ENCODE measurements at regions of chr1 and their contacts with region 1.

Region 1: GRCh38 chr1:116556289-116557006 is 14.4 kb downstream of the CD58 start:
- DNase-seq: peak; percentile 88
- H3K4me3 Mint-ChIP-seq: peak overlapping the region; percentile 19
- H3K27ac Mint-ChIP-seq: peak overlapping the region; percentile 86
- H3K4me1 Mint-ChIP-seq: peaks cover 69% of the 10 kb centered on the region
- H3K27me3 Mint-ChIP-seq: no peaks in the 10 kb centered on the region

Region 2: DNA sequence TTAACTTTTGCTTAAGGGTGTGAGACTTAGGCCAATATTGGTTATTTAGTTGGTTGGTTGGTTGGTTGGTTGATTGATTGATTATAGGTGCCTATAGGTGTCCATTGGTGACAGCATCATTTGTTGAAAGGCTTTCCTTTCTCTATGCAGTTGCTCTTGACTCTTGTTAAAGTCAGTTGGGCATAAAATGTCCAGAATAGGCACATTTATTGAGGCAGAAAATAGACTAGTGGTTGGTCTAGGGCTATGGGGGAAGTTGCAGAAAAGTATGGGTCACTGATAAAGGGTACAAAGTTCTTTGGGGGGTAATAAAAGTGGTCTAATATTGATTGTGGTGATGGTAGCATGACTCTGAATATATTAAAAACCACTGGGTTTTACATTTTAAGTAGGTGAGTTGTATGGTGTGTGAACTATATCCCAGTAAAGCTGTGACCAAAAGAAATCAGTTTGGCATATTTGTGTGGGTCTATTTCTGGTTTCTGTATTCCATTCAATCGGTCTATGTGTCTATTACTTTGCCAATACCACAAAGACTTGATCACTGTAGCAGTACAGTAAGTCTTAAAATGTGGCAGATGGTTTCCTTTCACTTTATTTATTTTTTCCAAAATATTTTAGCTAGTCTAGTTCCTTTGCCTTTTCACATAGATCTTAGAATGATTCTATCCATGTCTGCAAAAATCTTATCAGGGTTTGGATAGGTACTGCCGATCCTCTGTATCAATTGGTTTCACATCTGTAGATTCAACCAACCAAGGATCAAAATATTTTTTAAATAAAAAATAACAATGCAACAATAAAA is 120.4 kb before region 1 on chr1:
- intact Hi-C with region 1: loop called (anchors 5 kb)
- DNase-seq: no peak
- H3K4me3 Mint-ChIP-seq: no peak overlapping the region
- H3K27ac Mint-ChIP-seq: no peak overlapping the region
- H3K4me1 Mint-ChIP-seq: no peaks in the 10 kb centered on the region
- H3K27me3 Mint-ChIP-seq: peaks cover 39% of the 10 kb centered on the region

Region 3: GRCh38 chr1:116514708-116515525 is 41.5 kb before region 1 on chr1:
- intact Hi-C with region 1: loop called (anchors 2 kb)
- DNase-seq: peak; percentile 92
- H3K4me3 Mint-ChIP-seq: peak overlapping the region; percentile 76
- H3K27ac Mint-ChIP-seq: peak overlapping the region; percentile 93
- H3K4me1 Mint-ChIP-seq: peaks cover 64% of the 10 kb centered on the region
- H3K27me3 Mint-ChIP-seq: no peaks in the 10 kb centered on the region

Region 4: GRCh38 chr1:116544588-116545358 is 11.7 kb before region 1 on chr1:
- intact Hi-C with region 1: loop called (anchors 1 kb)
- DNase-seq: no peak
- H3K4me3 Mint-ChIP-seq: peak overlapping the region; percentile 81
- H3K27ac Mint-ChIP-seq: peak overlapping the region; percentile 98
- H3K4me1 Mint-ChIP-seq: peaks cover 70% of the 10 kb centered on the region
- H3K27me3 Mint-ChIP-seq: no peaks in the 10 kb centered on the region

Region 5: GRCh38 chr1:116777831-116778830 is 221.7 kb after region 1 on chr1:
- intact Hi-C with region 1: no loop called
- DNase-seq: peak; percentile 62
- H3K4me3 Mint-ChIP-seq: peak overlapping the region; percentile 73
- H3K27ac Mint-ChIP-seq: peak overlapping the region; percentile 97
- H3K4me1 Mint-ChIP-seq: peaks cover 38% of the 10 kb centered on the region
- H3K27me3 Mint-ChIP-seq: no peaks in the 10 kb centered on the region

Region 6: GRCh38 chr1:116847688-116848531 is 291.5 kb after region 1 on chr1:
- intact Hi-C with region 1: no loop called
- DNase-seq: peak; percentile 71
- H3K4me3 Mint-ChIP-seq: peak overlapping the region; percentile 44
- H3K27ac Mint-ChIP-seq: peak overlapping the region; percentile 61
- H3K4me1 Mint-ChIP-seq: peaks cover 23% of the 10 kb centered on the region
- H3K27me3 Mint-ChIP-seq: no peaks in the 10 kb centered on the region

Measured in activated CD4-positive, alpha-beta T cell treated with anti-CD3 and anti-CD28 coated beads, Interleukin-2, amount 10 ng/mL, durations not matched to agents 24 days and 14 days (primary cell).